Heart left ventricle (tissue), 16 donors: ENCODE measurements at regions of chr6 and their contacts with region 1.

Region 1: DNA sequence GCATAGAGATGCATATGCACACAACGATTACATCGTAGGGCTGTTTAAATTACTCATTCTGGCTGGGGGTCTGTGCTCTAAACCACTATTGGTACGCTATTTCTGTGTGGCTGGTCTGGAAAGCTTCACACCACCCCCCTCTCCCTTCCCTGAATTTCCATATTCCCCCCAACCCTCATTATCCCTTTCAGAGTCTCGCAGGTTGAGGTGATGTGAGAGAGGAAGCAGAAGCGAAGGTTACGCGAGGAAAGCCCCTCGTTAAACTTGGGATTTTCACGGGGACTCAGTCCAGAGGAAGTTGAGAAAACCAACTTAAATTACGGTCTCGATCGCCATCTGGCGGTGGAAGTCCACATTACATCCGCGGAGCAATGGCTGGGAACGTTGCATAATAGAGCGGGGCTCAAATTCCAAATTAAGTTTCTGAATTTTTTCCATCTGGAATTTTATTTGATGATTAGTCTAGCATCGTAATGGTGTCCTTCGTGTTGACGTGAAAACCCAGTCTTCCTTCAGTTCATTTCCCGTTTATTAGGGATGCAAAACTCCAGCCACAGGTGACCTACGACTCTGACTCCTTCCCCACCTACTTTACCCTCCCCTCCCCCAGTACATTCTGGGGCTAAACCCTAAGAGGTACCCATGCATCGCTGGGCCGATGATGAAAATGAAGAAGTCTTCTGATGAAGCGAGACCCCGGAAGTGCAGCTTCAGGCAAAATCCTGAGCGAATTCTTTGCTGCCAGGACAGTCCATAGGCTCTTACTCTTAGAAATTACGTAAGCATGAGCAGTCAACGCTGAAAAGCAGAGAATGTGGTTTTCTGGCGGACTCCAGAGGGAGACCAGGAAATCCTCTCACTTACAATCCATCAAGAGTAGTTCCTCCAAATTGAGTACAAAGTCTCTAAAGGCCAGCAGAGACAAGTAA is 19.7 kb downstream of the HLA-DOB start:
- DNase-seq: peak; percentile 51 to 83 (median 65)
- ATAC-seq: peak; percentile 67 to 80 (median 74)
- H3K4me3 ChIP-seq: peak overlapping the region in 8 of 12 donors; percentile 6 to 43 (median 20)
- H3K27ac ChIP-seq: peak overlapping the region in 2 of 12 donors; percentile 6 to 59
- H3K4me1 ChIP-seq: peaks cover 0 to 45% (median 2%) of the 10 kb centered on the region in 12 donors
- H3K27me3 ChIP-seq: peaks cover 0 to 80% (median 19%) of the 10 kb centered on the region in 9 donors
- CTCF ChIP-seq: peak; percentile 86 to 92 (median 88)
- POLR2A ChIP-seq: no peak

Region 2: DNA sequence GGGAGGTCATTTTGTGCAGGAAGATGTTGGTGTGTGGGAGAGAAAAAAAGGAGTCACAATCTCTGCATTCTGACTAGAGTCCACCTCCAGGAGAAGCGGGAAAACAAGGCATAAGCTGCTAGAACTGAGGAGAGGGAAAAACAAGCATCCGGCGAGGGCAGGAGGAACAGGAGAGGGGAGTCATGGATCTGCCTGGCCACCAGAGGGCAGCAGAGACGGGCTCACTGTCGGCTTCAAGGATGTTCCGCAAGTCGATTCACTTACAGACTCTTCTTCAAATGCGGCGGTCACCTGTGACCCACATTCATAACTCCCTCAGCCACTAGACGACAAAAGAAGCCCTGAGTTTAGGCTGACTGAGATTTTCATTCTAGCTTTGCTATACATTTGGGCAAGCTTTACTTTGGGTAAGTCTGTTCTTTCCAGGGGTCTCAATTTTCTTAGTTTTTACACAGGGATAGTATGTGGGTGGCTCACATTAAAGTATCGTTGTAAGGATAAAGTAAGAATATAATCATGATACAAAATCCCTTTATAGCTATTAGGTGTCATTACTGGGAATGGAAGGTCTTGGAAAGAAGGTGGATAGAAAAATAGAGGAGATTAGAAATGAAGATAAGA is 383.6 kb before region 1 on chr6:
- intact Hi-C with region 1: loop called in 9 of 10 experiments (anchors 1 to 5 kb)
- DNase-seq: peak; percentile 77 to 91 (median 78)
- ATAC-seq: peak in 3 of 4 donors; percentile 69 to 89 (median 85)
- H3K4me3 ChIP-seq: no peak overlapping the region
- H3K27ac ChIP-seq: no peak overlapping the region
- H3K4me1 ChIP-seq: peaks cover 0 to 17% (median 0%) of the 10 kb centered on the region in 12 donors
- H3K27me3 ChIP-seq: peaks cover 0 to 65% (median 11%) of the 10 kb centered on the region in 9 donors
- CTCF ChIP-seq: peak; percentile 88 to 97 (median 94)
- POLR2A ChIP-seq: no peak

Region 3: DNA sequence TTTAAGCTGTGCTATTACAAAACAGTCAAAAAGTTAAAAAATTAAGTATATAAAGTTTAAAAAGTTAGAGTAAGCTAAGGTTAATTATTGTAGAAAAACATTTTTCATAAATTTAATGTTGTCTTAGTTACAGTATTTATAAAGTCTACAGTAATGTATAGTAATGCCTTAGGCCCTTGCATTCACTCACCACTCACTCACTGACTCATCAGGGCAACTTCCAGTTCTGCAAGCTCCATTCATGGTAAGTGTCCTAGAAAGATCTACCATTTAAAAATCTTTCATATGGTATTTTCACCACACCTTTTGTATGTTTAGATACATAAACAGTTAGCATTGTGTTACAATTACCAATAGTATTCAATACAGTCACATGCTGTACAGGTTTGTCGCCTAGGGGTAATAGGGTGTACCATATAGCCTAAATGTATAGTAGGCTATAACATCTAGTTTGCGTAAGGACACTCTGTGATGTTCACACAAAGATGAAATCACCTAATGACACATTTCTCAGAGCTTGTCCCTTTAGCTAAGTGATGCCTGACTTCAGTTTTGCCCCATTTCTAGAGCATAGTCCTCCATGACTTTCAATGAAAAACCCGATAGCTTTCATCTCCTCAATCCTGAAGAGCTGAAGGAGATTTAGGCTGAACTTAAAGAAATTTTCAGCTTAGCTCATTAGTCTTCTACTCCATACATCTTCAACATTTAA is 372.4 kb before region 1 on chr6:
- intact Hi-C with region 1: loop called in 3 of 10 experiments (anchors 5 kb)
- DNase-seq: no peak
- ATAC-seq: no peak
- H3K4me3 ChIP-seq: no peak overlapping the region
- H3K27ac ChIP-seq: no peak overlapping the region
- H3K4me1 ChIP-seq: no peaks in the 10 kb centered on the region
- H3K27me3 ChIP-seq: peaks cover 0 to 20% (median 0%) of the 10 kb centered on the region in 9 donors
- CTCF ChIP-seq: no peak
- POLR2A ChIP-seq: no peak

Region 4: DNA sequence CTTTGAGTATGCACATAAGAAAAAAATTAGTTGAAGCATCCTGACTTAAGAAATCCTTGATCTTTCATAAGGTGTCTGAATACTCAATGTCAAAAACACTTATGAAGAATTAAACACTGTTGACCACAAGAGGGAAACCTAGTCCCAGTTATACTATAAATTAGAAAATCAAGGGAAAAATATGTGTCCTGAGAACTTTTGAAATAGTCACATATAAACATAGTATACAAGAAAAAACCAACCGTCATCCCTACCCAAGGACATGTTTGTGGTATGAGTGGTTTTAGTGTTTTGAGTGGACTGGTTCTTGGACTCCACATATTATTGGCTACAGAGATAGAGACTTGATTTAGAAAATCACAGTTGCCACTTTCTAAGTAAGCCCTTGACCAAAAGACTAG is 365.1 kb before region 1 on chr6:
- intact Hi-C with region 1: loop called in 2 of 10 experiments (anchors 5 kb)
- DNase-seq: no peak
- ATAC-seq: no peak
- H3K4me3 ChIP-seq: no peak overlapping the region
- H3K27ac ChIP-seq: no peak overlapping the region
- H3K4me1 ChIP-seq: peaks cover 0 to 9% (median 0%) of the 10 kb centered on the region in 12 donors
- H3K27me3 ChIP-seq: peaks cover 0 to 14% (median 0%) of the 10 kb centered on the region in 9 donors
- CTCF ChIP-seq: peak; percentile 16 to 66 (median 42)
- POLR2A ChIP-seq: no peak

Region 5: GRCh38 chr6:32692019-32692418 is 105.1 kb before region 1 on chr6:
- intact Hi-C with region 1: loop called in 2 of 10 experiments (anchors 5 to 10 kb)
- DNase-seq: peak in 2 of 5 donors; percentile 28 to 32
- ATAC-seq: no peak
- H3K4me3 ChIP-seq: no peak overlapping the region
- H3K27ac ChIP-seq: no peak overlapping the region
- H3K4me1 ChIP-seq: peaks cover 0 to 5% (median 0%) of the 10 kb centered on the region in 12 donors
- H3K27me3 ChIP-seq: peaks cover 0 to 11% (median 0%) of the 10 kb centered on the region in 9 donors
- CTCF ChIP-seq: peak in 8 of 12 donors; percentile 15 to 53 (median 34)
- POLR2A ChIP-seq: no peak

Region 6: DNA sequence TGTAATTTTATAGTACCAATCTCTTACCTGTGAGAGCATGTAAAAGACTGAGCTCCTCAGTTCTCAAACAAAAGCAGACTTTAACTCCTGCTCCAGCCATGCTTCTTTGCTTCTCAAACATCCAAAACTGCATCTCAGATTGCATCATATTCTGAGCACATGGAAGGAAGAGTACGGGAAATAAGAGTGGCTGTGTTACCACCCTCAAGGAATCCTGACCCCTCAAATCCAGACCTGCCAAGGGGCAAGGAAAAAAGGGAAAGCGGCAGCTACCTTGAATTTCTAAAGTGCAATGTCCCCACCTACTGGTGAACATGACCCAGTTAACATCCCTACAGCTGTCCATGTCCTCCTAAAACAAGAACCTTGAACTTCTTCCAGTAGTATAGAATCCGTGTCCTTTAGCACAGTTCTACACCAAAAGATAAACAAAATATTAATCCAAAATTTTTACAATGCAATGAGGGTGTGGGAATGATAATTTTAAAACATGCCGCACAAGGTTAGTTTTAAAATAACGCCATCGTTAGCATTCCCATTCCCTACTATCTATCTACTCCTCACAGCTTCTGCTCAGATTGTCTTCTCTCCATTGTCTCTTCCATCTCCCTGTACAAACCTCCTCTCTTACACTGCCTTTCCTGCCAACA is 96.6 kb before region 1 on chr6:
- intact Hi-C with region 1: loop called in 4 of 10 experiments (anchors 5 to 10 kb)
- DNase-seq: peak in 2 of 5 donors; percentile 29 to 41
- ATAC-seq: peak; percentile 42 to 89 (median 70)
- H3K4me3 ChIP-seq: no peak overlapping the region
- H3K27ac ChIP-seq: no peak overlapping the region
- H3K4me1 ChIP-seq: peaks cover 0 to 3% (median 0%) of the 10 kb centered on the region in 12 donors
- H3K27me3 ChIP-seq: peaks cover 0 to 18% (median 8%) of the 10 kb centered on the region in 9 donors
- CTCF ChIP-seq: peak; percentile 27 to 81 (median 66)
- POLR2A ChIP-seq: no peak